Calu3 (cell line): ENCODE measurements at regions of chr13 and their contacts with region 1.

Region 1: DNA sequence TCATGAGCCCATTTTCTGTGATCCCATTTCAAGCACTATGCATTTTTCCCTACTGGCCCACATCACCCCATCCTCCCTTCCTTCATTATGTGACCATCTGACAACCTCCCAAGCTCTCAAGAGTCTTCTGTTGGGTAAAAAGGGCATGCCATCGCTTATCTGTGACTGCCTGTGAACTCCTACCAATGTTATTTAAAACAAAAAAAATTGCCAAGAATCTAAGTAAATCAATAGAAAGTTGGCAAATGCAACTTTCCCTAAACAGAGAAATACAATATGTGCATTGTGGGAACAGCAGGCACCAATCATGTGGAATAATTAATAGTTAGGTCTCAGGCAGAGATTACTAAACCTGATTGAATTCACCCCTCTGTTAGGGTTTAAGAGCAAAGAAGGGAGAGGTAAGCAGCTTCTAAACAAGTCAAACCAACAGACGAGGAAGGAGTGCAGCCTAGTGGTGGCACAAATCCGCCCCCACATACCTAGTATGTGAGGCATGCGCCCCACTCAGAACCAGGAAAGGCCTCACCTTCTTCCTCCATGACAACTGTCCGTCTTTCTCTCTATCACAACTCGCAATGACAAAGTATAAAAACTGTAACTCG is 29.8 kb downstream of the DZIP1 start:
- DNase-seq: peak; percentile 44
- H3K4me3 Mint-ChIP-seq: no peak overlapping the region
- H3K27ac Mint-ChIP-seq: peak overlapping the region; percentile 86
- H3K4me1 Mint-ChIP-seq: peaks cover 16% of the 10 kb centered on the region
- H3K27me3 Mint-ChIP-seq: no peaks in the 10 kb centered on the region
- CTCF ChIP-seq: no peak

Region 2: GRCh38 chr13:94928127-94928775 is 686.5 kb before region 1 on chr13:
- CTCF ChIA-PET with region 1: no interaction called
- intact Hi-C with region 1: no loop called
- DNase-seq: no peak
- H3K4me3 Mint-ChIP-seq: no peak overlapping the region
- H3K27ac Mint-ChIP-seq: no peak overlapping the region
- H3K4me1 Mint-ChIP-seq: no peaks in the 10 kb centered on the region
- H3K27me3 Mint-ChIP-seq: no peaks in the 10 kb centered on the region
- CTCF ChIP-seq: no peak

Region 3: DNA sequence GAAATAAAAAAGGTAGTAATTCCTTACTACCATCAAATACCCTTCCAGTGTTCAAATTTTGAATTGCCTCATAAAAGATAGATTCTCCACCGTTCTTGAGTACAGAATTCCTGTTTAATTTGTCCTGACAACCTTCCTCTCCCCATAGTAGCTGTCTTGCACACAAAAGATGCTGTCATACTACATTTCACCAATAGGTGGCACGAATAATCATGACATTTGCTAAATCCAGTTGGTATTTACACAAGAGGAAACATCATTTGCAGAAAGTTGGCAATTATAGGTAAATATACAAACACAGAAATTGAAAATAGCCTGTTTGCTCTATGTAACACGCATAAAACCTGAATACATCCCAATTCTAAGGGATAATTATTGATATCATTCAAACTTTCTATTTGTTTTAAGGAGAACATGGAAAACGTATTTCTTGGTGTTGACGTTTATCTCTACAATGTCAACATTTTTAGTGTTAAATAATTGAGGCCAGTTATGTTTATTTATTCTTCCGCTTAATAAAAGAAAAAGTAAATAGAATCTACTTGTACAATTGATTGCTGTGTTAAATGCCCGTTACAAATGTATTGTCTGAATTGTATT is 120.6 kb before region 1 on chr13:
- CTCF ChIA-PET with region 1: no interaction called
- intact Hi-C with region 1: loop called (anchors 5 kb)
- DNase-seq: peak; percentile 16
- H3K4me3 Mint-ChIP-seq: no peak overlapping the region
- H3K27ac Mint-ChIP-seq: no peak overlapping the region
- H3K4me1 Mint-ChIP-seq: no peaks in the 10 kb centered on the region
- H3K27me3 Mint-ChIP-seq: no peaks in the 10 kb centered on the region
- CTCF ChIP-seq: no peak

Region 4: GRCh38 chr13:95536632-95537241 is 78.0 kb before region 1 on chr13:
- CTCF ChIA-PET with region 1: interaction called, 3 read pairs
- intact Hi-C with region 1: loop called (anchors 2 kb)
- DNase-seq: no peak
- H3K4me3 Mint-ChIP-seq: no peak overlapping the region
- H3K27ac Mint-ChIP-seq: no peak overlapping the region
- H3K4me1 Mint-ChIP-seq: peaks cover 37% of the 10 kb centered on the region
- H3K27me3 Mint-ChIP-seq: no peaks in the 10 kb centered on the region
- CTCF ChIP-seq: no peak

Region 5: DNA sequence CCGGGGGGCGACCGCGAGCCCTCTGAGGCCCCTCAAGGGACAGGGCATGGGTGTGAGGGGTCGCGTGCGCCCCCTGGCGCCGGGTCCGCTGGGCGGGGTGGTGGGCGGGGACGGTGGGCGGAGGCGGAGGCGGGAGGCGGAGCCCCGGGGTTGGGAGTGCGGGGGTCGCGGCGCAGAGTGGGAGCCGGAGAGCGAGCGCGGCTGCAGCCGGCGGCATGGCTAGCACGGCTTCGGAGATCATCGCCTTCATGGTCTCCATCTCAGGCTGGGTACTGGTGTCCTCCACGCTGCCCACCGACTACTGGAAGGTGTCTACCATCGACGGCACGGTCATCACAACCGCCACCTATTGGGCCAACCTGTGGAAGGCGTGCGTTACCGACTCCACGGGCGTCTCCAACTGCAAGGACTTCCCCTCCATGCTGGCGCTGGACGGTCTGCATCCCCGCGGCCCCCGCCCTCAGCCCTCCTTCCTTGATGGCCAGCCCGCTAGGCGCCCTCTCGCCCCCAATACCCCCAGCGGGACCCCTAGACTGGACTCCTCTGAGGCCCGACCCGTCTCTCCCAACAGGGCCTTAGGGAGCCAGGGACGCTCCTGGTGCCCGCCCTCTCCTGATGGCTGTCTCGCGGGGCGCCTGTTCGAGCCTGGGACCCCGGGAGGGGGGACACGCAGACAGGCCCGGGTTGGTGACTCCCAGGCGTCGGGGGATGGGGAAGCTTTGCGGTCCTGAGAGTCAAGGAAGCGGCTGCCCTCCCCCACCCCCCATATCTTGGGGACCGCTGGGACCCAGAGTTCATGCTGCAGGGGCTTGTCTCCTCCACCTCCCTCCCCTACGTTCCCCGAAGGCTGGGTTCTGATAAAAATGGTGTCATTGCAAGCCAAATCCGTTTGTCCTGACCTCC is 62.0 kb before region 1 on chr13 and contains the start of gene CLDN10:
- CTCF ChIA-PET with region 1: no interaction called
- intact Hi-C with region 1: loop called (anchors 5 kb)
- DNase-seq: peak; percentile 50
- H3K4me3 Mint-ChIP-seq: peak within 1 kb of the TSS; percentile 77
- H3K27ac Mint-ChIP-seq: no peak within 1 kb of the TSS
- H3K4me1 Mint-ChIP-seq: no peaks in the 10 kb centered on the region
- H3K27me3 Mint-ChIP-seq: no peaks in the 10 kb centered on the region
- CTCF ChIP-seq: no peak
- total RNA-seq, gene CLDN10: 46.8 and 55.0 TPM in 2 replicates